PC-3 (cell line): ENCODE measurements at regions of chr3 and their contacts with region 1.

Region 1: GRCh38 chr3:141561426-141562034 is 74.7 kb downstream of the RASA2 start:
- DNase-seq: peak; percentile 70
- ATAC-seq: 0 out of 2 replicates have a peak, but pooled peaks have one; percentile 24
- H3K4me3 ChIP-seq: no peak overlapping the region
- H3K27ac ChIP-seq: no peak overlapping the region
- H3K4me1 ChIP-seq: no peaks in the 10 kb centered on the region
- H3K27me3 ChIP-seq: no peaks in the 10 kb centered on the region
- CTCF ChIP-seq: peak; percentile 85

Region 2: GRCh38 chr3:141152801-141153678 is 408.5 kb before region 1 on chr3:
- CTCF ChIA-PET with region 1: no interaction called
- POLR2A ChIA-PET with region 1: no interaction called
- intact Hi-C with region 1: no loop called
- DNase-seq: no peak
- ATAC-seq: no peak
- H3K4me3 ChIP-seq: no peak overlapping the region
- H3K27ac ChIP-seq: no peak overlapping the region
- H3K4me1 ChIP-seq: peaks cover 2% of the 10 kb centered on the region; the same call in 1 of the 2 replicates
- H3K27me3 ChIP-seq: no peaks in the 10 kb centered on the region
- CTCF ChIP-seq: no peak

Region 3: DNA sequence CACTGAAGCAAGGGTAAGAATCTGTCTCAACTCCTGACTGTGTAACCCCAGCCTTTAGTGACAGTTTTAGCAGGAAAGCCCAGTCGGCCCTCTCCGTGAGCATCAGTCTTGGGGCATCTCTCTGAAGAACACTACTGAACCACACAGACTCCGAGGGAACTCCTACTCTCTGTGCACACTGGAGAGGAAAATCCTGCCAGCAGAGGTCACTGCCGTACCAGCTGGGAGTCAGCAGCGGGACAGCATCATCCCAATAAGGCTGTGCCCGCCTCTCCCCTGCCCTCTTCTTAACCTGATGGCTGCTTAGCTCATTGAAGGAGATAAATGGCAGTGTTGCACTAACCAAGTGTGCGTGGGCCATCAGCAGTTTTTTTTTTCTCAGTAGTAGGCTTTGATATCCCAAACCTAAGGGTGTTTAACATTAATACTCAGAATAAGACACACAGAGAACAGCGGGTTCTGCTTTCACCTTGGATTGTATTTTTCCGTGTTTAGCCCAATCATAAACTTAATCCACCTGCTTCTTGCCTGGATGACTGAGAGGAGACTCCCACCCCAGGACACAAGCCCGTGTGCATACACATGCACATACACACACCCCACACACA is 101.3 kb before region 1 on chr3:
- CTCF ChIA-PET with region 1: interaction called, 12 read pairs
- POLR2A ChIA-PET with region 1: interaction called, 5 read pairs
- intact Hi-C with region 1: loop called (anchors 1 kb)
- DNase-seq: peak; percentile 88
- ATAC-seq: peak; percentile 98
- H3K4me3 ChIP-seq: no peak overlapping the region
- H3K27ac ChIP-seq: no peak overlapping the region
- H3K4me1 ChIP-seq: peaks cover 13% of the 10 kb centered on the region
- H3K27me3 ChIP-seq: no peaks in the 10 kb centered on the region
- CTCF ChIP-seq: peak; percentile 82

Region 4: GRCh38 chr3:141477224-141477623 is 84.3 kb before region 1 on chr3:
- CTCF ChIA-PET with region 1: no interaction called
- POLR2A ChIA-PET with region 1: no interaction called
- intact Hi-C with region 1: loop called (anchors 1 kb)
- DNase-seq: peak; percentile 87
- ATAC-seq: peak; percentile 99
- H3K4me3 ChIP-seq: no peak overlapping the region
- H3K27ac ChIP-seq: peak overlapping the region; percentile 36; the same call in 1 of the 2 replicates
- H3K4me1 ChIP-seq: peaks cover 9% of the 10 kb centered on the region
- H3K27me3 ChIP-seq: no peaks in the 10 kb centered on the region
- CTCF ChIP-seq: no peak